ENCODE measurements at regions of chr7 and their contacts with region 1.

Region 1: GRCh38 chr7:151759591-151760042 is 117.3 kb downstream of the PRKAG2 start:
- DNase-seq: no peak
- ATAC-seq: peak; percentile 80
- H3K4me3 ChIP-seq: no peak overlapping the region
- H3K27ac ChIP-seq: no peak overlapping the region
- H3K4me1 ChIP-seq: peaks cover 39% of the 10 kb centered on the region
- H3K27me3 ChIP-seq: no peaks in the 10 kb centered on the region
- CTCF ChIP-seq: peak; percentile 88

Region 2: GRCh38 chr7:151550656-151551286 is 208.8 kb before region 1 on chr7:
- intact Hi-C with region 1: no loop called
- DNase-seq: peak; percentile 66
- ATAC-seq: peak; percentile 51
- H3K4me3 ChIP-seq: no peak overlapping the region
- H3K27ac ChIP-seq: no peak overlapping the region
- H3K4me1 ChIP-seq: peaks cover 4% of the 10 kb centered on the region
- H3K27me3 ChIP-seq: no peaks in the 10 kb centered on the region
- CTCF ChIP-seq: no peak

Region 3: DNA sequence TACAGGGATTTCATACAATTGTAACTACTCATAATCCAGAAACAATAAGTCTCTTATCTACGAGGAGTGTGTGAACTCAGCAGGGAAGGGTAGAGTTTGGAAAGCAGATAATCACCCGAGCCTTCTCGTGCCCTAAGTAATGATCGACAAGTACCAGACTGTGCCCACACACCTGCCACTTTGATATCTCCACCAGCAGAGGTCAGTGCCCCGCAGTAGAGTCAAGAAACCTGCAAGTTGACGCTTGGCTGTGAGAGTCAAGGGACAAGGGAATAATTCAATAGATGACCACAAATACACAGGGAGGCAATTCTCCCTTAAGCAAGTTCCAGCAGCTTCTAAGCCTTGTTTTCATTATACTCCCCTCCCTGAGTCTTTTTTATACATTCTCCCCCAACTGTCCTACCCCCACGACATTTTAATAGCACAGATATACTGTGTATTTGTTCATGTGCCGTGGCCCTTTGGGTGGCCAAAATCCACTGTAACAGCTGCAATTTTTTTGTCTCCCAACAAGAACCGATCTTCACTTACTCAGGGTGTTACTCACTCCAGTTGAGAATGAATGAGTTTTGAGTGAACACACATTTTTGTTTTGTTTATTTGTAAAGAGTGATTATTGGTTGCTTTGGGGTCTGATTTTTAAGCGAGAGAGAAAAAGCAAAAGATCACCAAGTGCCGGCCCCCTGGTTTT is 133.0 kb before region 1 on chr7:
- intact Hi-C with region 1: loop called (anchors 10 kb)
- DNase-seq: no peak
- ATAC-seq: peak; percentile 82
- H3K4me3 ChIP-seq: no peak overlapping the region
- H3K27ac ChIP-seq: no peak overlapping the region
- H3K4me1 ChIP-seq: peaks cover 13% of the 10 kb centered on the region
- H3K27me3 ChIP-seq: no peaks in the 10 kb centered on the region
- CTCF ChIP-seq: peak; percentile 49

Measured in upper lobe of right lung (tissue), 1 donor.